ENCODE measurements at regions of chrX and their contacts with region 1.

Region 1: GRCh38 chrX:68894513-68895340 is 65.9 kb downstream of the EFNB1 start:
- DNase-seq: peak; percentile 85
- H3K4me3 ChIP-seq: peak overlapping the region in 3 of 4 donors; percentile 16 to 30 (median 17)
- H3K27ac ChIP-seq: peak overlapping the region; percentile 85 to 90 (median 86)
- H3K4me1 ChIP-seq: peaks cover 0 to 37% (median 23%) of the 10 kb centered on the region in 4 donors
- H3K27me3 ChIP-seq: no peaks in the 10 kb centered on the region
- CTCF ChIP-seq: no peak
- EP300 ChIP-seq: no peak
- POLR2A ChIP-seq: no peak

Region 2: GRCh38 chrX:68846536-68846935 is 48.2 kb before region 1 on chrX:
- intact Hi-C with region 1: loop called (anchors 5 kb)
- DNase-seq: no peak
- H3K4me3 ChIP-seq: no peak overlapping the region
- H3K27ac ChIP-seq: peak overlapping the region in 3 of 4 donors; percentile 49 to 68 (median 57)
- H3K4me1 ChIP-seq: peaks cover 0 to 16% (median 11%) of the 10 kb centered on the region in 4 donors
- H3K27me3 ChIP-seq: no peaks in the 10 kb centered on the region
- CTCF ChIP-seq: no peak
- EP300 ChIP-seq: no peak
- POLR2A ChIP-seq: no peak

Region 3: GRCh38 chrX:68929332-68930150 is 34.8 kb after region 1 on chrX:
- intact Hi-C with region 1: no loop called
- DNase-seq: no peak
- H3K4me3 ChIP-seq: no peak overlapping the region
- H3K27ac ChIP-seq: peak overlapping the region in 1 of 4 donors; percentile 42
- H3K4me1 ChIP-seq: peaks cover 0 to 10% (median 7%) of the 10 kb centered on the region in 4 donors
- H3K27me3 ChIP-seq: no peaks in the 10 kb centered on the region
- CTCF ChIP-seq: no peak
- EP300 ChIP-seq: no peak
- POLR2A ChIP-seq: no peak

Region 4: GRCh38 chrX:68989865-68990606 is 95.3 kb after region 1 on chrX:
- intact Hi-C with region 1: loop called (anchors 10 kb)
- DNase-seq: no peak
- H3K4me3 ChIP-seq: no peak overlapping the region
- H3K27ac ChIP-seq: peak overlapping the region; percentile 56 to 69 (median 66)
- H3K4me1 ChIP-seq: peaks cover 0 to 15% (median 11%) of the 10 kb centered on the region in 4 donors
- H3K27me3 ChIP-seq: no peaks in the 10 kb centered on the region
- CTCF ChIP-seq: no peak
- EP300 ChIP-seq: no peak
- POLR2A ChIP-seq: no peak

Region 5: GRCh38 chrX:69024931-69025330 is 130.2 kb after region 1 on chrX:
- intact Hi-C with region 1: loop called (anchors 5 kb)
- DNase-seq: peak; percentile 88
- H3K4me3 ChIP-seq: no peak overlapping the region
- H3K27ac ChIP-seq: peak overlapping the region; percentile 47 to 57 (median 50)
- H3K4me1 ChIP-seq: peaks cover 0 to 29% (median 8%) of the 10 kb centered on the region in 4 donors
- H3K27me3 ChIP-seq: no peaks in the 10 kb centered on the region
- CTCF ChIP-seq: no peak
- EP300 ChIP-seq: no peak
- POLR2A ChIP-seq: no peak

Region 6: GRCh38 chrX:69133921-69134542 is 239.3 kb after region 1 on chrX:
- intact Hi-C with region 1: loop called (anchors 10 kb)
- DNase-seq: no peak
- H3K4me3 ChIP-seq: no peak overlapping the region
- H3K27ac ChIP-seq: no peak overlapping the region
- H3K4me1 ChIP-seq: peaks cover 0 to 16% (median 4%) of the 10 kb centered on the region in 4 donors
- H3K27me3 ChIP-seq: no peaks in the 10 kb centered on the region
- CTCF ChIP-seq: peak in 1 of 4 experiments; percentile 31
- EP300 ChIP-seq: no peak
- POLR2A ChIP-seq: no peak

Region 7: DNA sequence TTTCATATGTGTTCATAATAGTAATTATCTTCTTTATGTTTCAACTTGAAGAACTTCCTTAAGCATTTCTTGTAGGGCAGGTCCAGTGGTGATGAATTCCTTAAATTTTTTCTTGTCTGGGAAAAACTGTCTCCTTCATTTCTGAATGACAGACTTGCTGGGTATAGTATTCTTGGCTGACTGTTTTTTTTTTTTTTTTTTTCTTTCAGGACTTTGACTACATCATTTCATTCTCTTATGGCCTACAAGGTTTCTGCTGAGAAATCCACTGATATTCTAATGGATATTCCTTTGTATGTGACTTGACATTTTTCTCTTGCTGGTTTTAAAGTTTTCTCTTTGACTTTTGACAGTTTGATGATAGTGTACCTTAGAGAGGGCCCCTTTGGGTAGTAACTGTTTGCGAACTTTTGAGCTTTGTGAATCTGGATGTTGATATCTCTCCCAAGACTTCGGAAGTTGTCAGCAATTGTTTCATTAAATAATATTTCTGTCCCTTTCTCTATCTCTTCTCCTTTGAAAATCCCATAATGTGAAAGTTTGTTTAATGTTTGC is 775.4 kb after region 1 on chrX:
- intact Hi-C with region 1: no loop called
- DNase-seq: no peak
- H3K4me3 ChIP-seq: no peak overlapping the region
- H3K27ac ChIP-seq: no peak overlapping the region
- H3K4me1 ChIP-seq: no peaks in the 10 kb centered on the region
- H3K27me3 ChIP-seq: no peaks in the 10 kb centered on the region
- CTCF ChIP-seq: no peak
- EP300 ChIP-seq: no peak
- POLR2A ChIP-seq: no peak

Measured in sigmoid colon (tissue), 7 donors.